ENCODE measurements at regions of chr4 and their contacts with region 1.

Region 1: GRCh38 chr4:3106339-3107186 is 32.1 kb downstream of the HTT start:
- DNase-seq: peak; percentile 87 to 90
- ATAC-seq: peak; percentile 99 to 100 (median 100)
- H3K4me3 ChIP-seq: no peak overlapping the region
- H3K4me3 Mint-ChIP-seq: no peak overlapping the region
- H3K27ac ChIP-seq: no peak overlapping the region
- H3K27ac Mint-ChIP-seq: peak overlapping the region; percentile 32 to 83
- H3K4me1 ChIP-seq: peaks cover 4% of the 10 kb centered on the region
- H3K4me1 Mint-ChIP-seq: peaks cover 12 to 17% of the 10 kb centered on the region in 2 donors
- H3K27me3 ChIP-seq: no peaks in the 10 kb centered on the region
- H3K27me3 Mint-ChIP-seq: no peaks in the 10 kb centered on the region
- CTCF ChIP-seq: peak; percentile 96

Region 2: GRCh38 chr4:3193531-3194203 is 87.1 kb after region 1 on chr4:
- intact Hi-C with region 1: loop called (anchors 2 kb)
- DNase-seq: peak in 1 of 2 donors; percentile 59
- ATAC-seq: no peak
- H3K4me3 ChIP-seq: no peak overlapping the region
- H3K4me3 Mint-ChIP-seq: peak overlapping the region; percentile 64
- H3K27ac ChIP-seq: peak overlapping the region; percentile 87
- H3K27ac Mint-ChIP-seq: peak overlapping the region; percentile 79 to 96
- H3K4me1 ChIP-seq: peaks cover 78% of the 10 kb centered on the region
- H3K4me1 Mint-ChIP-seq: peaks cover 87 to 94% of the 10 kb centered on the region in 2 donors
- H3K27me3 ChIP-seq: no peaks in the 10 kb centered on the region
- H3K27me3 Mint-ChIP-seq: no peaks in the 10 kb centered on the region
- CTCF ChIP-seq: peak; percentile 42

Region 3: GRCh38 chr4:3442959-3443749 is 336.6 kb after region 1 on chr4:
- intact Hi-C with region 1: loop called (anchors 1 kb)
- DNase-seq: peak; percentile 77 to 80
- ATAC-seq: peak; percentile 66 to 95 (median 87)
- H3K4me3 ChIP-seq: no peak overlapping the region
- H3K4me3 Mint-ChIP-seq: no peak overlapping the region
- H3K27ac ChIP-seq: no peak overlapping the region
- H3K27ac Mint-ChIP-seq: no peak overlapping the region
- H3K4me1 ChIP-seq: peaks cover 12% of the 10 kb centered on the region
- H3K4me1 Mint-ChIP-seq: no peaks in the 10 kb centered on the region
- H3K27me3 ChIP-seq: no peaks in the 10 kb centered on the region
- H3K27me3 Mint-ChIP-seq: no peaks in the 10 kb centered on the region
- CTCF ChIP-seq: peak; percentile 99

Region 4: DNA sequence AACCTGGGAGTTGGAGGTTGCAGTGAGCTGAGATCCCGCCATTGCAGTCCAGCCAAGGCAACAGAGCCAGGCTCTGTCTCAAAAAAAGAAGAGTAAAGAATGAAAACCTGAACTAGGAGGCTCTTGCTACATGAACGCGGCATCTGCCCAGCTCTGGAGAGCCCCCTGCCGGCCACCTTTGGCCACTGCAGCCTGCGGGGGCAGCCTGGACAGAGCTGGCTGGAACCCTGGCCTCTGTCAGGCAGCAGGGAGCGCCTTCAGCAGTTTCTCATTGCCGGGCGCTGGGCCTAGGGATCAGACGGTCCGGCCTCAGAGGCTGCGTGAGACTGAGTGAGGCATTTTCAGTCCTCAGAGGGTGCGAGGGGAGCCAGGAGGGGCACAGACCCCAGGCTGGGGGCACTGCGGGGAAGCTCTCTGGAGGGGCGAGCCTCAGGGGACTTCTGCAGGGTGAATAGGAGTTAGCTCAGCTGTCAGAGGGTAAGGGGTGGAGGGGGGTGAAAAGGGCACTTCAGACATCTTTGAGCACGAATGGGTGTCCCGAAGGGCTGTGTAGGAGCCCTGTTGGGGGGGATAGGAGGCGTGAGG is 374.1 kb after region 1 on chr4:
- intact Hi-C with region 1: loop called (anchors 2 kb)
- DNase-seq: peak; percentile 73 to 78
- ATAC-seq: peak; percentile 77 to 87 (median 80)
- H3K4me3 ChIP-seq: no peak overlapping the region
- H3K4me3 Mint-ChIP-seq: no peak overlapping the region
- H3K27ac ChIP-seq: no peak overlapping the region
- H3K27ac Mint-ChIP-seq: peak overlapping the region in 1 of 2 donors; percentile 49
- H3K4me1 ChIP-seq: peaks cover 35% of the 10 kb centered on the region
- H3K4me1 Mint-ChIP-seq: peaks cover 10 to 23% of the 10 kb centered on the region in 2 donors
- H3K27me3 ChIP-seq: no peaks in the 10 kb centered on the region
- H3K27me3 Mint-ChIP-seq: peaks cover 0 to 3% of the 10 kb centered on the region in 2 donors
- CTCF ChIP-seq: peak; percentile 97

Region 5: DNA sequence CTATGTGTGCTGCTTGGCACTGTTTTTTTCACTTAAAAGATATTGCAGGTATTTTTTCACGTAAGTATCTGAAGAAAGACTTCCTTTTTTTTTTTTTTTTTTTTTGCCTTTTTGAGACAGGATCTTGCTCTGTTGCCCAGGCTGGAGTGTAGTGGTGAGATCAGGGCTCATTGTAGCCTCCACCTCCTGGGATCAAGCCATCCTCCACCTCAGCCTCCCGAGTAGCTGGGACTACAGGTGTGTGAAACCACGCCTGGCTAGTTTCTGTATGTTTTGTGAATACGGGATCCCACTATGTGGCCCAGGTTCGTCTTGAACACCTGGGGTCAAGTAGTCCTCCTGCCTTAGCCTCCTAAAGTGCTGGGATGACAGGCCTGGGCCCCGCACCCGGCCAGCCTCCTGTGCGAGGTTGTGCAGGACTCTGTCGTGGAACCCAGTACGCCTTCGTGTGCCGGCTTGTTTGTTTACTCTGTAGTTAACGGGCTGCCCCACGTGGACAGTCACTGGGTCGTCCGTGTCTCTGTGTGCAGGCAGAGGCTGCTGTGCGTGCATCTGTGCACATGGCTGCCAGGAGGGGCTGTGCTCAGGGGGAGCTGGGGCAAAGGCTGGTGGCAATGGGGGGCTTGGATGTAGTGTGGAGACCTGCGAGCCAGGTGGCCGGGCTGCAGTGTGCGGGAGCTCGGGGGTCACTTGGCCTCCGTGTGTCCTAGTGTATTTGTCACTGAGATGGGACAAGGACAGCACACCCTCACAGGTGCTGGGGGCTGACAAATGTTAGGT is 839.1 kb after region 1 on chr4:
- intact Hi-C with region 1: loop called (anchors 10 kb)
- DNase-seq: no peak
- ATAC-seq: no peak
- H3K4me3 ChIP-seq: no peak overlapping the region
- H3K4me3 Mint-ChIP-seq: no peak overlapping the region
- H3K27ac ChIP-seq: no peak overlapping the region
- H3K27ac Mint-ChIP-seq: no peak overlapping the region
- H3K4me1 ChIP-seq: no peaks in the 10 kb centered on the region
- H3K4me1 Mint-ChIP-seq: peaks cover 0 to 10% of the 10 kb centered on the region in 2 donors
- H3K27me3 ChIP-seq: no peaks in the 10 kb centered on the region
- H3K27me3 Mint-ChIP-seq: peaks cover 18% of the 10 kb centered on the region in 2 donors
- CTCF ChIP-seq: no peak